GM10248 (cell line): ENCODE measurements at regions of chr2 and their contacts with region 1.

Region 1: GRCh38 chr2:102726128-102727087 is 35.4 kb upstream of the TMEM182 start:
- DNase-seq: no peak
- CTCF ChIP-seq: no peak

Region 2: GRCh38 chr2:102708847-102709559 is 17.4 kb before region 1 on chr2:
- CTCF ChIA-PET with region 1: interaction called, 16 read pairs
- POLR2A ChIA-PET with region 1: no interaction called
- DNase-seq: no peak
- CTCF ChIP-seq: no peak

Region 3: DNA sequence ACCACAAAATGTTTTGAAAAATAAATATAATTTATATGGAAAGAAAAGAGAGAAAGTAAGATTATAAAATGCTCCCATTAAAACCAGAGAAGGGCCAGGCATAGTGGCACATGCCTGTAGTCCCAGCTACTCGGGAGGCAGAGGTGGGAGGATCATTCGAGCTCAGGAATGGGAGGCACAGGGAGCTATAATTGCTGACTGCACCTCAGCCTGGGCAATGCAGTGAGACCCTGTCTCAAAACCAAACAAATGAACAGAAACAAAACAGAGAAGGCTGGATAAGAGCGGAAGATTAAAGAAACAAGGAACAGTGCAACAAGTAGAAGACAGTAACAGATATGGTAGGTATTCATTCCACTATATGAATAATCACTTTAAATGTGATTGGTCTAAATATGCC is 16.9 kb after region 1 on chr2:
- CTCF ChIA-PET with region 1: no interaction called
- POLR2A ChIA-PET with region 1: no interaction called
- DNase-seq: no peak
- CTCF ChIP-seq: no peak

Region 4: DNA sequence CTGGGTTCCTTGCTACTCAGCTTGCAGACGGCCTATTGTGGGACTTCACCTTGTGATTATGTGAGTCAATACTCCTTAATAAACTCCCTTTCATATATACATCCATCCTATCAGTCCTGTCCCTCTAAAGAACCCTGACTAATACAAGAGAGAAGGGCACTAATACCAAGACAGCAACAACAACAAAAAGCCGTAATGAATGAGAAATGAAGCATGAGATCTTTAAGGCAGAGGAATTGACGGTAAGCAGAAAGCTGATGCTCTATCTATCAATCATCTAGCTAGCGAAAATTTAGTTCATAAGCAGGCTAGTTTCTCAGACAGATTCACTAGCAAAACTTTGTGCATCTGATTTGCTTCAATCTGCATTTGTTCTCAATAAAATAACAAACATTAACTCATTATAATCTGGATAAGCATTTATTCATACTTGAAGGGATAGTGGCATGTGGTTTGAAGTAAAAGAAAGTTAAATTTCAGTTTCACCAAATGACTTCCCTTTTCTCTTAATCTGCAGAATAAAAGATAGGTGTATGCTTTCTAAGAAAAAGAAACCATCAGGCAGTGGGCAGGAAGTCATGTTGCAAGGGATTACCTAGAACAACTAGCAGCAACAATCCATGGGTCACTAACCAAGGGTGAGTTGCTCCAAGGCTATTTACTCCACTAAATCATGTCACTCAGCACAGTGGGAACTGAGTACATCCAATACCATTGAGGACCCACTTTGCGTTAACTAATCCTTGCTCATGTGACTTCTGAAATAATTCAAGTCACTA is 411.9 kb after region 1 on chr2:
- CTCF ChIA-PET with region 1: no interaction called
- POLR2A ChIA-PET with region 1: no interaction called
- DNase-seq: no peak
- CTCF ChIP-seq: no peak